AG04450 (cell line): ENCODE measurements at regions of chr1 and their contacts with region 1.

Region 1: DNA sequence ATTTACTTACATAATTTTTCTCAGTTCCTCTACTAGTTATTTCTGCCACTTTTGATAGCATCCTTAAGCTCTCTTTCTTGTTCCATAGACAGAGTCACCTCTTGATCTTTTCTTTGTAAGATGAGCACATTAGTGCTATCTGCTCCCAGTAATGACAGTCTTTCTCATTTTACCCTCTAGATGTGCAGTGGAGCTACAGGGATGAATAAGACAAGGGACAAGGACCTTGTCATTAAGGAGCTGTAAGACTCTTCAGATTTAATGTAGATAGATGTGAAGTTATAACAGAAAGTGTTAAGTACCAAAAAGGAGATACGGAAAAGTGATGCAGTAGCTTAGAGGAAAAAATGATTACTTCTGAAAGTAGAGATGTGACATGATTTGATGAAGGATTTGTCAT is 20.4 kb downstream of the SCP2 start:
- DNase-seq: no peak
- H3K4me3 ChIP-seq: no peak overlapping the region
- H3K27ac ChIP-seq: no peak overlapping the region
- H3K27me3 ChIP-seq: no peaks in the 10 kb centered on the region
- CTCF ChIP-seq: no peak

Region 2: DNA sequence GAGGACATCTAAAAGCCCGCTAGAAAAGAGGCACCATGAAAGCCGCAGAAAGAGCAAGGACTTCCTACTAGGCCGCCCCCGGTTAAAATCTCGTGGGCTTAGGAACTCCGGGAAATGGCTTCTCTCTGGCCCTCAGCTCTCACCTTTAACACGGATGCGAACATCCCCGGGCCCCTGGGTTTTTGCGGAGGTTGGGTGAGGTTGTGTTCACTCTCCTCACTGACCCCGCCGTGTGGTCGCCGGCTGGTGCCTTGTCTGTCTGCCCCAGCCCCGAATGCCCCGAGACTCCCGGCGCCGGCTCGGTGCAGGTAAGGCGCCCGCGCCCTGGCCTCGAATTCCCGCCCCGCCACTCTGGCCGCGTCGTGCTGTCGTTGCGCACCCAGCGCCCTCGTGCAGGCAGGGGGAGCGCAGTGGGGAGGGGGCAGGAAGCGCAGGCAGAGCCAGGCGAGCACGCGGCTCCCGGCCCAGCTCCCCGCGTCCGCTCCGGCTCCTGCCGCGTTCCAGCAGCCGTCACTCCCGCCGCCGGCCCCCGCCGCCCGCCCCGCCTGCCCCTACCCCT is 314.7 kb before region 1 on chr1 and contains the start of gene SHISAL2A:
- CTCF ChIA-PET with region 1: no interaction called
- POLR2A ChIA-PET with region 1: no interaction called
- DNase-seq: no peak
- H3K4me3 ChIP-seq: peak within 1 kb of the TSS; percentile 44
- H3K27ac ChIP-seq: no peak within 1 kb of the TSS
- H3K27me3 ChIP-seq: peaks cover 43% of the 10 kb centered on the region
- CTCF ChIP-seq: no peak
- polyA plus RNA-seq, gene SHISAL2A: not detected in 2 replicates

Region 3: GRCh38 chr1:52867087-52867863 is 80.2 kb before region 1 on chr1:
- CTCF ChIA-PET with region 1: no interaction called
- POLR2A ChIA-PET with region 1: interaction called, 10 read pairs
- DNase-seq: no peak
- H3K4me3 ChIP-seq: no peak overlapping the region
- H3K27ac ChIP-seq: no peak overlapping the region
- H3K27me3 ChIP-seq: no peaks in the 10 kb centered on the region
- CTCF ChIP-seq: no peak